ENCODE measurements at regions of chr4 and their contacts with region 1.

Region 1: GRCh38 chr4:83110223-83110945 is 4.1 kb downstream of the PLAC8 start:
- DNase-seq: peak; percentile 85 to 87
- H3K4me3 ChIP-seq: peak overlapping the region; percentile 14 to 47 (median 33)
- H3K27ac ChIP-seq: peak overlapping the region in 2 of 3 donors; percentile 50 to 51
- H3K4me1 ChIP-seq: peaks cover 0 to 3% of the 10 kb centered on the region in 2 donors
- H3K27me3 ChIP-seq: no peaks in the 10 kb centered on the region
- CTCF ChIP-seq: peak in 5 of 6 experiments; percentile 24 to 59 (median 47)
- POLR2A ChIP-seq: no peak

Region 2: DNA sequence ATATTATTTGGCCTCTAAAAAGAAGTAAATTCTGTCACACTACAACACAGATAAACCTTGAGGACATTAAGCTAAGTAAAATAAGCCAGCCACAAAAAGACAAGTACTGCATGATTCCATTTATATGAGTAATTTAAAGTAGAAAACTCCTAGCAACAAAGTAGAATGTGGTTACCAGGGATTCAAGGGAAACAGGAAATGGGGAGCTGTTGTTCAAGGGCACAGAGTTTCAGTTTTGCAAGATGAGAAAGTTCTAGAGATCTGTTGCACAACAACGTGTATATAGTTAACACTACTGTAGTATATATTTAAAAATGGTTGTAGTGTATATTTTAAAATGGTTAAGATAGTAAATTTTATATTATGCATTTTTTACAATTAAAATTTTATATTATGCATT is 244.8 kb before region 1 on chr4:
- intact Hi-C with region 1: no loop called
- DNase-seq: no peak
- H3K4me3 ChIP-seq: no peak overlapping the region
- H3K27ac ChIP-seq: peak overlapping the region in 1 of 3 donors; percentile 32
- H3K4me1 ChIP-seq: peaks cover 0 to 2% of the 10 kb centered on the region in 2 donors
- H3K27me3 ChIP-seq: no peaks in the 10 kb centered on the region
- CTCF ChIP-seq: no peak
- POLR2A ChIP-seq: no peak

Region 3: GRCh38 chr4:83089410-83090158 is 20.8 kb before region 1 on chr4:
- intact Hi-C with region 1: loop called (anchors 2 kb)
- DNase-seq: no peak
- H3K4me3 ChIP-seq: no peak overlapping the region
- H3K27ac ChIP-seq: no peak overlapping the region
- H3K4me1 ChIP-seq: peaks cover 4 to 9% of the 10 kb centered on the region in 2 donors
- H3K27me3 ChIP-seq: no peaks in the 10 kb centered on the region
- CTCF ChIP-seq: no peak
- POLR2A ChIP-seq: no peak

Region 4: DNA sequence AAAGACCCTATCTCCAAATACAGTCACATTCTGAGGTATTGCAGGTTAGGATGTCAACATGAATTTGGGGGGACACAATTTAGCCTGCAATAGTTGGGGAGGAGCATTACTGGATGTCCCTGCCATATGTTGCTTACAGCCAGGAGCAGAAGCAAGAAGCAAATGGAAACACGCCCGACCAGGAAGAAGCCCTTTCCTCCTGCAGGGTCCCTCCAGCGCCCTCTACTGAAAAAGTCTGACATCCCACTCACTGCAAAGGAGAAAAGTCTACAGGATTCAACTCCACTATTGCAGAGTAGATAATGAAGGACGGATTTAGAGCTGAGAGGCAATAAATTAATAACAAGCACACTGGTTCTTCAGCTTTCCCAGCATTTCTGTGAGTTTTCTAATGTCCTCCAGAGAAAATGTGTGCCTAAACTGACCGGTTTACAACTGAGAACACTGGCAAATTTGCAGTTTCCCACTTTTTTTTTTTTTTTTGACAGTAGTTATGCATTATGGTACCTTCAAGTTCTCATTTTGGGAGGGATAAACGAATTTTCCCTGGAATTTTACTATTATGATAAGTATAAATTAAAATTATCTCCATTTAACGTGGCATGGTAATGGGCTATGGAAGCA is 142.5 kb after region 1 on chr4:
- intact Hi-C with region 1: no loop called
- DNase-seq: peak; percentile 31 to 54
- H3K4me3 ChIP-seq: no peak overlapping the region
- H3K27ac ChIP-seq: no peak overlapping the region
- H3K4me1 ChIP-seq: peaks cover 0 to 11% of the 10 kb centered on the region in 2 donors
- H3K27me3 ChIP-seq: no peaks in the 10 kb centered on the region
- CTCF ChIP-seq: peak; percentile 24 to 57 (median 50)
- POLR2A ChIP-seq: no peak